Mammary epithelial cell (primary cell): ENCODE measurements at regions of chr16 and their contacts with region 1.

Region 1: GRCh38 chr16:78333808-78334207 is 234.4 kb downstream of the WWOX start:
- DNase-seq: no peak
- H3K4me3 ChIP-seq: no peak overlapping the region
- H3K27ac ChIP-seq: no peak overlapping the region
- H3K4me1 ChIP-seq: no peaks in the 10 kb centered on the region
- H3K27me3 ChIP-seq: no peaks in the 10 kb centered on the region
- CTCF ChIP-seq: no peak

Region 2: DNA sequence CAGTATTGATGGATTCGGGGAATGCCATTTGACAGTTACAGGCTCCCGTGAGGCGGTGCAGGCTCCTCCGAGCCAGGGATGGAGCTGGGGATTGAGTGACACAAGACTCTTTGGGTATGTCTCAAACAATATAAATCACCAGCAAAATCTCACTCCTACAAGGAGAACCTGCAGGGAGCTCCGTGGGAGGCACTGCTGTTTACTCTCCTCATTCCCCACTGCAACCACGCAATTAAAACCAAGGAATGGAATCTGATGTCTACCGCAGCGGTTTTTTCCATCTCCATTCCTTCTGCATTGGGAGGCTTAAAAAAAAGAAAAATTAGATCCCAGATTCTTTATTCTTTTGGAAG is 76.5 kb before region 1 on chr16:
- CTCF ChIA-PET with region 1: no interaction called
- dilution Hi-C with region 1: no loop called
- in situ Hi-C with region 1: no loop called
- intact Hi-C with region 1: no loop called
- DNase-seq: no peak
- H3K4me3 ChIP-seq: no peak overlapping the region
- H3K27ac ChIP-seq: no peak overlapping the region
- H3K4me1 ChIP-seq: no peaks in the 10 kb centered on the region
- H3K27me3 ChIP-seq: no peaks in the 10 kb centered on the region
- CTCF ChIP-seq: no peak

Region 3: GRCh38 chr16:78353610-78354275 is 19.9 kb after region 1 on chr16:
- CTCF ChIA-PET with region 1: no interaction called
- dilution Hi-C with region 1: no loop called
- in situ Hi-C with region 1: no loop called
- intact Hi-C with region 1: loop called (anchors 1 kb)
- DNase-seq: no peak
- H3K4me3 ChIP-seq: no peak overlapping the region
- H3K27ac ChIP-seq: no peak overlapping the region
- H3K4me1 ChIP-seq: no peaks in the 10 kb centered on the region
- H3K27me3 ChIP-seq: no peaks in the 10 kb centered on the region
- CTCF ChIP-seq: no peak

Region 4: DNA sequence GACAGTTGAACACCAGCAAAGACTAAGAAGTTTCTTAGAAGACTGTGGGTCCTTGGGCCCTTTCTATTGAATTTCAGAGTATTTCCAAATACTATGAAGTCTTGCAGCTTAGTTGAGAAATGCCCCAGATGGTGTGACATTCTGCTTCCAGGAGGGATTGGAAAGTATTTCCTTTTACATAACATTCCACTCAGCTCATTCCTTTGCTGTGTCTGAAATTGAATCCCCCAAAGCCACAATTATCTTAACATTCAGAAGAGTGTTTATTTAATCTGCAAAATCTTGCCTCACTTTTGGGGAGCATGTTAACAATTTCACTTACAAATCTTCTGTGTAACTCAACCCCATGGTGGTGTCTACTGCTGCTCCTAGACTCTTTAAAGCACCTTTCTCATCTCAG is 73.4 kb after region 1 on chr16:
- CTCF ChIA-PET with region 1: no interaction called
- dilution Hi-C with region 1: no loop called
- in situ Hi-C with region 1: no loop called
- intact Hi-C with region 1: no loop called
- DNase-seq: no peak
- H3K4me3 ChIP-seq: no peak overlapping the region
- H3K27ac ChIP-seq: no peak overlapping the region
- H3K4me1 ChIP-seq: no peaks in the 10 kb centered on the region
- H3K27me3 ChIP-seq: no peaks in the 10 kb centered on the region
- CTCF ChIP-seq: no peak